Activated CD8-positive, alpha-beta T cell treated with anti-CD3 and anti-CD28 coated beads, Interleukin-2, amount 10 ng/mL, durations not matched to agents 7 days and 5 days (primary cell): ENCODE measurements at regions of chr11 and their contacts with region 1.

Region 1: GRCh38 chr11:117946842-117947526 is 17.8 kb upstream of the TMPRSS13 start:
- DNase-seq: peak; percentile 89
- ATAC-seq: peak; percentile 34
- H3K4me3 Mint-ChIP-seq: no peak overlapping the region
- H3K27ac Mint-ChIP-seq: peak overlapping the region; percentile 76
- H3K4me1 Mint-ChIP-seq: peaks cover 90% of the 10 kb centered on the region
- H3K27me3 Mint-ChIP-seq: no peaks in the 10 kb centered on the region

Region 2: GRCh38 chr11:117426269-117426685 is 520.7 kb before region 1 on chr11:
- CTCF ChIA-PET with region 1: interaction called, 14 read pairs
- POLR2A ChIA-PET with region 1: no interaction called
- DNase-seq: peak; percentile 72
- ATAC-seq: peak; percentile 56
- H3K4me3 Mint-ChIP-seq: no peak overlapping the region
- H3K27ac Mint-ChIP-seq: no peak overlapping the region
- H3K4me1 Mint-ChIP-seq: peaks cover 5% of the 10 kb centered on the region
- H3K27me3 Mint-ChIP-seq: no peaks in the 10 kb centered on the region

Region 3: GRCh38 chr11:117843666-117844484 is 103.1 kb before region 1 on chr11:
- CTCF ChIA-PET with region 1: interaction called, 212 read pairs
- POLR2A ChIA-PET with region 1: interaction called, 6 read pairs
- DNase-seq: peak; percentile 90
- ATAC-seq: peak; percentile 85
- H3K4me3 Mint-ChIP-seq: no peak overlapping the region
- H3K27ac Mint-ChIP-seq: no peak overlapping the region
- H3K4me1 Mint-ChIP-seq: peaks cover 7% of the 10 kb centered on the region
- H3K27me3 Mint-ChIP-seq: peaks cover 11% of the 10 kb centered on the region

Region 4: GRCh38 chr11:117907251-117907981 is 39.6 kb before region 1 on chr11:
- CTCF ChIA-PET with region 1: interaction called, 28 read pairs
- POLR2A ChIA-PET with region 1: no interaction called
- DNase-seq: peak; percentile 78
- ATAC-seq: peak; percentile 95
- H3K4me3 Mint-ChIP-seq: peak overlapping the region; percentile 22
- H3K27ac Mint-ChIP-seq: peak overlapping the region; percentile 70
- H3K4me1 Mint-ChIP-seq: peaks cover 20% of the 10 kb centered on the region
- H3K27me3 Mint-ChIP-seq: no peaks in the 10 kb centered on the region

Region 5: DNA sequence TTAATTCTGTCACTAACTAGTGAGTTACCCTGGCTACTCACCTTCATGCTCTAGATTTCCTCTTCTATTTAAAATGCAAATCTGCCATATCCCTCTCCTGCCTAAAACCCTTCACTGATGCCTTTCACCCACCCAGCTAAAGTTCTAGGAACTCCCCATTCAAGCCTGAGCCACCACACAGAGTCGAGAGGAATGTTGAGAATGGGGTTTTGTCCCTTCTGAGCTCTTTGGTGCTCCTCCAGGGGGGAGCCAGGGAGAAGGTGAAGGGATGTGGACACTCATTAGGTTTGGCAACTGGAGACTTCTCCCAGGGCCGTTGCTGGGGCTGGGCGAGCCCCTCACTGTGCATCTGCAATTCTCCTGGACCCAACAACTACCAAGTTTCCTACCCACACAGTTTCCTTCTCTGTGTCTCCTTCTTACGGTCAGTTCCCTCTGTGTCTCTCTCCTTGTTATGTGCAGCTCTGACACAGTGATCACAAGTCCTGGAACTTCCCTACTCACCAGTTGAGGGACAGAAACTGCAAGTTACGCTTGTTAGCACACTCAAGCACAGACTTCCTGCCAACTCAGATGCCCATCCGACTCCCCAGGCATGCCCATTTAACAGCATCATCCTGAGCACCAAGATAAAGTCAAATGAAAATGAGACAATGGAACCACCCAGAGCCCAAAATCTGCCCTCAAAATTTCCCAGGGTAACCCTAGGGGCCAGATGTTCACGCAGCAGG is 32.7 kb after region 1 on chr11:
- CTCF ChIA-PET with region 1: interaction called, 401 read pairs
- POLR2A ChIA-PET with region 1: interaction called, 146 read pairs
- DNase-seq: no peak
- ATAC-seq: peak; percentile 32
- H3K4me3 Mint-ChIP-seq: no peak overlapping the region
- H3K27ac Mint-ChIP-seq: peak overlapping the region; percentile 81
- H3K4me1 Mint-ChIP-seq: peaks cover 81% of the 10 kb centered on the region
- H3K27me3 Mint-ChIP-seq: no peaks in the 10 kb centered on the region

Region 6: DNA sequence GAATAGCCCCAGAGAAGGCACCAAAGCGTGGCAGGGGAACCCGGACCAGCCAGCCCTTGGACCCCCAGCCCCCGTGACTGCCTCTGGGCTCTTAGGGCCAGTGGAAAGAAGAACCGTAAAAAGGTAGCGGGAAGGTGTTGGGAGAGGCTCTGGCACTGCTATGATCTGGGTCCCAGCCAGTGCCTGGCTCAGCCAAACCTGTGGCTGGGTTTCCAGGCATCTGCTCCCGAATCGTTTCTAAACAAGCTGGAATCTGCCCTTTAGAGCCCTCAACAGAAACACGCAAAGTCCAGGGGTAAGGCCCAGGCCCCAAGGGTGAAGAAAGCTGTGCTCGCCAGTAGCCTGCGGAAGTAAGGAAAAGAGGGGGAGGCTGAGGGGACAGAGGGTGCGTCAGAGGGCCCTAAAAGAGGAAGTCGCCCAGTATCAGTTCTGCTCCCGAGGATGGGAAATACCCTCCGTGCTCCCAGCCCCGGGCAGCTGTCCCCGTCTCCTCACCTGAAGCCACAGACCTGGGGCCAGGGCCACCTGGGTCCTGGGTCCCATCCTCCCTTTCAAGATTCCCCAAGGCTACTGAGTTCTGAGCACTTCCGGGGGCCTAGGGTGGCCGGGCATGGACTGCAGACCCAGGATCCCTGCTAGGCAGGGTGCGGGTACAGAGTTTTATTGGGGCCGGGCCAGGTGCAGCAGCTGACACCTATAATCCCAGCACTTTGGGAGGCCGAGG is 63.9 kb after region 1 on chr11:
- CTCF ChIA-PET with region 1: interaction called, 26 read pairs
- POLR2A ChIA-PET with region 1: interaction called, 11 read pairs
- DNase-seq: no peak
- ATAC-seq: no peak
- H3K4me3 Mint-ChIP-seq: no peak overlapping the region
- H3K27ac Mint-ChIP-seq: peak overlapping the region; percentile 90
- H3K4me1 Mint-ChIP-seq: peaks cover 100% of the 10 kb centered on the region
- H3K27me3 Mint-ChIP-seq: no peaks in the 10 kb centered on the region

Region 7: GRCh38 chr11:118088477-118088920 is 141.5 kb after region 1 on chr11:
- CTCF ChIA-PET with region 1: no interaction called
- POLR2A ChIA-PET with region 1: no interaction called
- DNase-seq: no peak
- ATAC-seq: no peak
- H3K4me3 Mint-ChIP-seq: no peak overlapping the region
- H3K27ac Mint-ChIP-seq: no peak overlapping the region
- H3K4me1 Mint-ChIP-seq: no peaks in the 10 kb centered on the region
- H3K27me3 Mint-ChIP-seq: peaks cover 6% of the 10 kb centered on the region

Region 8: GRCh38 chr11:118171269-118172062 is 224.5 kb after region 1 on chr11:
- CTCF ChIA-PET with region 1: interaction called, 10 read pairs
- POLR2A ChIA-PET with region 1: no interaction called
- DNase-seq: peak; percentile 82
- ATAC-seq: peak; percentile 90
- H3K4me3 Mint-ChIP-seq: no peak overlapping the region
- H3K27ac Mint-ChIP-seq: no peak overlapping the region
- H3K4me1 Mint-ChIP-seq: peaks cover 10% of the 10 kb centered on the region
- H3K27me3 Mint-ChIP-seq: peaks cover 16% of the 10 kb centered on the region